ENCODE measurements at regions of chr4 and their contacts with region 1.

Region 1: DNA sequence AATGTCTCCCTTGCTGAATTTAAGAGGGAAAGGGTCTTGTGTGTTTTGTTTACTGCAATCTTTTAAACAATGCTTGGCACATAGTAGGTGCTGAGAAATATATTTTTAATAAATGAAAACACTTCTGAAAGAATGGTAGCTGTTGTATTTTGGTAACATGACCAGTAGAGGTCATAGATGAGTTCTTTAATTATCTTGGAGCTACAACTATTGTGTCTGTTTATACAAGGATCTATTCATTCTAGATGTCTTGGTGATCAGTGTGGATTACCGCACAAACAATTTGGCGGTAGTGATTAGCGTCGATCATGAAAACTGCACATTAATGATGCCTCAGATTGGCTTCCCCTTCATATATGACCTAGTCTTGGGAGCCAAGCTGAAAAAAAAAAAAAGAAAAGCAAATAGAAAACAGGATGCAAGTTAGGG is 21.4 kb upstream of the SCRG1 start:
- DNase-seq: peak in 2 of 9 experiments; percentile 14 to 41
- ATAC-seq: peak; percentile 44
- H3K4me3 ChIP-seq: no peak overlapping the region
- H3K4me3 Mint-ChIP-seq: no peak overlapping the region
- H3K27ac ChIP-seq: no peak overlapping the region
- H3K27ac Mint-ChIP-seq: no peak overlapping the region
- H3K4me1 ChIP-seq: peaks cover 5% of the 10 kb centered on the region
- H3K4me1 Mint-ChIP-seq: peaks cover 7% of the 10 kb centered on the region
- H3K27me3 ChIP-seq: no peaks in the 10 kb centered on the region
- H3K27me3 Mint-ChIP-seq: peaks cover 4% of the 10 kb centered on the region
- CTCF ChIP-seq: peak; percentile 57

Region 2: GRCh38 chr4:173135241-173135847 is 285.0 kb before region 1 on chr4:
- CTCF ChIA-PET with region 1: no interaction called
- POLR2A ChIA-PET with region 1: no interaction called
- intact Hi-C with region 1: no loop called
- DNase-seq: no peak
- ATAC-seq: no peak
- H3K4me3 ChIP-seq: no peak overlapping the region
- H3K4me3 Mint-ChIP-seq: no peak overlapping the region
- H3K27ac ChIP-seq: no peak overlapping the region
- H3K27ac Mint-ChIP-seq: no peak overlapping the region
- H3K4me1 ChIP-seq: no peaks in the 10 kb centered on the region
- H3K4me1 Mint-ChIP-seq: no peaks in the 10 kb centered on the region
- H3K27me3 ChIP-seq: no peaks in the 10 kb centered on the region
- H3K27me3 Mint-ChIP-seq: peaks cover 3% of the 10 kb centered on the region
- CTCF ChIP-seq: no peak

Region 3: DNA sequence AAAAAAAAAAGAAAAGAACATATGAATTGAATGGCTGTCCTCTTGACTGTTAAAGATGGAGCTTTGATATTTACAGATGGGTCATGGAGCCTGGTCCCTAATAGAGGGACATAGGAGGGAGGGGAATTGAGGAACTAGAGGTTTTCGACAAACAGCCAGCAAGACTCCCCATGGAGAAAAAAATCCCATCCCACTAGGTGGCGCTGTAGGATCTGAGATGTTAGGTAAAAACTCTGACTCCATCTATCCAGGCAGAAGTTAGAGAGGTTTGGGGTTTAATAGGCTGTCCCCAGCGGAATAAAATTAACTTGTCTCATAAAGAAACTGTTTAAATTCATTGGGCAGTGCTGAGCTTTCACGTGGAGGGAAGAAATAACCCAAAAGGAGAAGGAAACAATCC is 132.0 kb before region 1 on chr4:
- CTCF ChIA-PET with region 1: interaction called, 4 read pairs
- POLR2A ChIA-PET with region 1: no interaction called
- intact Hi-C with region 1: loop called (anchors 1 kb)
- DNase-seq: peak; percentile 36 to 77 (median 66)
- ATAC-seq: peak; percentile 31
- H3K4me3 ChIP-seq: no peak overlapping the region
- H3K4me3 Mint-ChIP-seq: peak overlapping the region; percentile 29
- H3K27ac ChIP-seq: no peak overlapping the region
- H3K27ac Mint-ChIP-seq: no peak overlapping the region
- H3K4me1 ChIP-seq: no peaks in the 10 kb centered on the region
- H3K4me1 Mint-ChIP-seq: peaks cover 13% of the 10 kb centered on the region
- H3K27me3 ChIP-seq: no peaks in the 10 kb centered on the region
- H3K27me3 Mint-ChIP-seq: no peaks in the 10 kb centered on the region
- CTCF ChIP-seq: peak; percentile 63

Region 4: GRCh38 chr4:173370477-173371291 is 49.7 kb before region 1 on chr4 and contains the start of gene SAP30:
- CTCF ChIA-PET with region 1: interaction called, 3 read pairs
- POLR2A ChIA-PET with region 1: no interaction called
- intact Hi-C with region 1: loop called in 1 of 2 experiments (anchors 5 kb)
- DNase-seq: peak; percentile 95 to 98 (median 98)
- ATAC-seq: peak; percentile 85
- H3K4me3 ChIP-seq: peak within 1 kb of the TSS; percentile 77 to 93
- H3K4me3 Mint-ChIP-seq: peak within 1 kb of the TSS; percentile 98
- H3K27ac ChIP-seq: peak within 1 kb of the TSS; percentile 78 to 85
- H3K27ac Mint-ChIP-seq: peak within 1 kb of the TSS; percentile 96
- H3K4me1 ChIP-seq: peaks cover 15% of the 10 kb centered on the region
- H3K4me1 Mint-ChIP-seq: peaks cover 34% of the 10 kb centered on the region
- H3K27me3 ChIP-seq: peaks cover 4 to 5% of the 10 kb centered on the region in 2 experiments
- H3K27me3 Mint-ChIP-seq: peaks cover 13% of the 10 kb centered on the region
- CTCF ChIP-seq: no peak
- total RNA-seq, gene SAP30: 3.6 to 3.7 TPM

Region 5: GRCh38 chr4:173494013-173494970 is 74.0 kb after region 1 on chr4:
- CTCF ChIA-PET with region 1: interaction called, 24 read pairs
- POLR2A ChIA-PET with region 1: interaction called, 6 read pairs
- intact Hi-C with region 1: loop called (anchors 1 to 2 kb)
- DNase-seq: peak in 8 of 9 experiments; percentile 29 to 80 (median 54)
- ATAC-seq: peak; percentile 92
- H3K4me3 ChIP-seq: peak overlapping the region; percentile 40 to 42
- H3K4me3 Mint-ChIP-seq: peak overlapping the region; percentile 77
- H3K27ac ChIP-seq: no peak overlapping the region
- H3K27ac Mint-ChIP-seq: no peak overlapping the region
- H3K4me1 ChIP-seq: peaks cover 4% of the 10 kb centered on the region
- H3K4me1 Mint-ChIP-seq: peaks cover 7% of the 10 kb centered on the region
- H3K27me3 ChIP-seq: no peaks in the 10 kb centered on the region
- H3K27me3 Mint-ChIP-seq: peaks cover 40% of the 10 kb centered on the region
- CTCF ChIP-seq: peak; percentile 55

Region 6: DNA sequence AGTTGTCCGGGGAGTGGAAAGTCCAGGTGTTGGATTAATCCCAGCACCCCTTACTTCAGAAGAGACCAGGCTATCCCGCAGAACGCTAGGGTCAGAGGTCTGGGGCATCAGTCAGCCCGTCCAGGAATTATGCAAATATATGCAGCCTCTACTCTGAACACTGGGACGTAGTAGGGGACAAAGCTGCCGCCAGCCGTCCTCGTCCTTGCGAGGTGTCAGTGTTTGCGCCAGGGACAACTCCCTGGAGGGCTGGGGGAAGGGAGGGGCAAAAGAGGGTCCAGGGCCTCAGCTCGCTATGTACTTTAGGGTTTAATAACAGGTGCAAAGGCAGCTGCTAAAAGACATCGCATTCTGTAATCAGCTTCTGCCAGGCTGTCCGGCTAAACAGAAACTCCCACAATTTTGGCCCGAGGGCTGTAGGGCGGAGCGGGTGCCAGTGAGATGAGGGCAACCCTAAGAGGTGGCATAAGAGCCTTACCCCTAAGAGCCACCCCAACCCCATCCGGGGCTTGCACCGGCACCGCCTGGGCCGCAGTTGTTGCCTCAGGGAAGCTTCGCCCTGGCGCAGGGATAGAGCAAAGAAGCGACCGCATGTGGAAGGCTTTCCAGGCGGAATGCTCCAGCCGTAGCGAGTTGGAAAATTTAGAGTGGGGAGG is 101.3 kb after region 1 on chr4:
- CTCF ChIA-PET with region 1: no interaction called
- POLR2A ChIA-PET with region 1: no interaction called
- intact Hi-C with region 1: no loop called
- DNase-seq: no peak
- ATAC-seq: no peak
- H3K4me3 ChIP-seq: no peak overlapping the region
- H3K4me3 Mint-ChIP-seq: no peak overlapping the region
- H3K27ac ChIP-seq: no peak overlapping the region
- H3K27ac Mint-ChIP-seq: no peak overlapping the region
- H3K4me1 ChIP-seq: peaks cover 18% of the 10 kb centered on the region
- H3K4me1 Mint-ChIP-seq: peaks cover 29% of the 10 kb centered on the region
- H3K27me3 ChIP-seq: peaks cover 64 to 68% of the 10 kb centered on the region in 2 experiments
- H3K27me3 Mint-ChIP-seq: peaks cover 81% of the 10 kb centered on the region
- CTCF ChIP-seq: no peak

Region 7: DNA sequence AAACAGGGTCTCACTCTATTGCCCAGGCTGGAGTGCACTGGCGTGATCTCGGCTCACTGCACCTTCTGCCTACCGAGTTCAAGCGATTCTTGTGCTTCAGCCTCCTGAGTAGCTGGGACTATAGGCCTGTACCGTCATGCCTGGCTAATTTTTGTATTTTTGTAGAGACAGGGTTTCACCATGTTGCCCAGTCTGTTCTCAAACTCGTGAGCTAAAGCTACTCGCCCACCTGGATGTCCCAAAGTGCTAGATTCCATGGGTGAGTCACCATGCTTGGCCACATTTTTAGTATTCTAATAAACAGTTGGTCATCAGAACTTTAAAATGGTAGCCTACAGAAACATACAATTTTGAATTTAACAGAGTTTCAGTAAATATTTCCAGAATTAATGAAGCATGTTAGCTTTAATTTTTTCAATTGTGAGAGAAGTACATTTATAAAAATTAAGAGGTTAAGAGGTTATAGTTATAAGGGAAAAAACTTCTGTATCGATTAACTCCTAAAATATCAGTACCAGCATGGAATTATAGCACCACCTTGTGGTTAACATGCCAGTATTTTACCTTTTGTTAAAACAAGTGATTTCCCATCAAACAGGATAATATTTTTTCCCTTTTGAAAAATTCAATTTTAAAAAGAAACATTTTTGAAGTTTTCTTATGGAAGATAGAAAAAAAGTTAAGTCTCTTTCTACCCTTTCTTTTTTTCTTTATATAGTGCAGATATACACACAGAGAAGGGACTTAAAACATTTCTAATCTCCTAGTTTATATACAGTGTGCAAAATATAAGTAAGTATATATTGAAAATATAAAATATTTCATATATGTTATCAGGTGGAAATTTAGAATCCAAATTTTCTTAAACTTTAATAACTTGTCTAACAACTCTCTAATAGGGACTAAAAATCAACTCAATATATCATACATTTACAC is 898.8 kb after region 1 on chr4:
- CTCF ChIA-PET with region 1: interaction called, 6 read pairs
- POLR2A ChIA-PET with region 1: no interaction called
- intact Hi-C with region 1: loop called in 1 of 2 experiments (anchors 2 kb)
- DNase-seq: peak in 2 of 9 experiments; percentile 38 to 59
- ATAC-seq: no peak
- H3K4me3 ChIP-seq: no peak overlapping the region
- H3K4me3 Mint-ChIP-seq: no peak overlapping the region
- H3K27ac ChIP-seq: no peak overlapping the region
- H3K27ac Mint-ChIP-seq: no peak overlapping the region
- H3K4me1 ChIP-seq: no peaks in the 10 kb centered on the region
- H3K4me1 Mint-ChIP-seq: no peaks in the 10 kb centered on the region
- H3K27me3 ChIP-seq: no peaks in the 10 kb centered on the region
- H3K27me3 Mint-ChIP-seq: no peaks in the 10 kb centered on the region
- CTCF ChIP-seq: peak; percentile 84